Activated T-helper 1 cell treated with anti-CD3 and anti-CD28 coated beads, Interleukin-12 subunit alpha, Interleukin-12 subunit beta, Interleukin-2, Interleukin-4 antibody, amounts not matched to agents 30 ng/mL and 10 ng/mL and 1 ng/mL, durations not matched to agents 14 hours and 24 hours and 36 hours (primary cell): ENCODE measurements at regions of chr2 and their contacts with region 1.

Region 1: GRCh38 chr2:113173542-113174395 is at the start of gene PSD4:
- DNase-seq: peak; percentile 86
- H3K4me3 Mint-ChIP-seq: peak within 1 kb of the TSS; percentile 89
- H3K27ac Mint-ChIP-seq: peak within 1 kb of the TSS; percentile 93
- H3K4me1 Mint-ChIP-seq: peaks cover 72% of the 10 kb centered on the region
- H3K27me3 Mint-ChIP-seq: peaks cover 3% of the 10 kb centered on the region
- total RNA-seq, gene PSD4: 249 and 257 TPM in 2 replicates

Region 2: GRCh38 chr2:112275306-112275886 is 898.4 kb before region 1 on chr2 and contains the start of gene ZC3H6:
- intact Hi-C with region 1: loop called (anchors 10 kb)
- DNase-seq: peak; percentile 99
- H3K4me3 Mint-ChIP-seq: peak within 1 kb of the TSS; percentile 91
- H3K27ac Mint-ChIP-seq: peak within 1 kb of the TSS; percentile 97
- H3K4me1 Mint-ChIP-seq: peaks cover 13% of the 10 kb centered on the region
- H3K27me3 Mint-ChIP-seq: peaks cover 2% of the 10 kb centered on the region
- total RNA-seq, gene ZC3H6: 3.3 and 4.3 TPM in 2 replicates

Region 3: GRCh38 chr2:113080134-113080533 is 93.6 kb before region 1 on chr2:
- intact Hi-C with region 1: loop called (anchors 2 kb)
- DNase-seq: peak; percentile 28
- H3K4me3 Mint-ChIP-seq: no peak overlapping the region
- H3K27ac Mint-ChIP-seq: no peak overlapping the region
- H3K4me1 Mint-ChIP-seq: peaks cover 17% of the 10 kb centered on the region
- H3K27me3 Mint-ChIP-seq: peaks cover 2% of the 10 kb centered on the region

Region 4: GRCh38 chr2:113157118-113157896 is 16.5 kb before region 1 on chr2:
- intact Hi-C with region 1: loop called (anchors 1 kb)
- DNase-seq: peak; percentile 48
- H3K4me3 Mint-ChIP-seq: peak overlapping the region; percentile 80
- H3K27ac Mint-ChIP-seq: peak overlapping the region; percentile 55
- H3K4me1 Mint-ChIP-seq: peaks cover 33% of the 10 kb centered on the region
- H3K27me3 Mint-ChIP-seq: no peaks in the 10 kb centered on the region

Region 5: DNA sequence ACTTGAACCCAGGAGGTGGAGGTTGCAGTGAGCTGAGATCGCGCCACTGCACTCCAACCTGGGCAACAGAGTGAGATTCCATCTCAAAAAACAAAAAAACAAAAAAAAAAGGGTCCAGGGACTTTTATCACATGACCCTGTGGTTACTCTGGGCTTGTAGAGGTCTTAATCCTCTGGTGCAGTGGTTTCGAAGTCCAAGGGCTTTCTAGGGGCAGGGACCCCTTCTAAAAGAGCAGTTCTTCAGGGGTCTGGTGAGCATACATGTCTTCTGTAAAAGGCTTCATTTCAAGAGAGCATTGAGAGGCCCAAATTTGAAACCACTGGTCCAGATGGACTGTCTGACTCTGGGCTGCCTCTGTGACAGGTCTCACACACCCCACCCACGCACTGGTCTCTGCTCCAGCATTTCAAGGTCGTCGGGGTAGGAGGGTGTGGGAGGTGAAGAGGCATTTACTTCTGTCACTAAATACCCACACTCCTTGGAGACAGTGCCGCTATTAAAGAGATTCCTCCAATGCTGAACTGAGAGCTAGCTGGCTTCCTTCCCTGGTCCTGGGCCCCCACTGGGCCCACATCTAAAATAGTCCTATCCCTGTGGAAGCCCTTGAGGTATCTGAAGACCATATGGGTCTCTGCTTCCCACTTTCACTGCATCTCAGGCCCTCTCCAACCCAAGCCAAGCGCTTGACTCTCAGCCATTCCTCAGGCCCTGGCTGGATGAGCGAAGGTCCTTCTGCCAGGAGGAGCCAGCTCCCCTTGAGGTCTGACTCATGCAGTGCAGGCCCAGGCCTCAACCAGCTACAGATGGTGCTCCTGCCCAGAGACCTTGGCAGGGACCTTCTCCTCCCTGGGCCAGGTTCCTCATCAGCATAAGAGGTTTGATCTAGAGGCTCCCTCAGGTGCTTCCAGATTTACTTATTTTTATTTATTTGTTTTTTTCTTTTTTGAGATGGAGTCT is 60.1 kb after region 1 on chr2:
- intact Hi-C with region 1: loop called (anchors 2 kb)
- DNase-seq: no peak
- H3K4me3 Mint-ChIP-seq: peak overlapping the region; percentile 51
- H3K27ac Mint-ChIP-seq: peak overlapping the region; percentile 68
- H3K4me1 Mint-ChIP-seq: peaks cover 33% of the 10 kb centered on the region
- H3K27me3 Mint-ChIP-seq: peaks cover 3% of the 10 kb centered on the region